Mammary epithelial cell (primary cell): ENCODE measurements at regions of chr9 and their contacts with region 1.

Region 1: GRCh38 chr9:119458068-119458467 is 88.8 kb upstream of the BRINP1 start:
- DNase-seq: no peak
- H3K4me3 ChIP-seq: no peak overlapping the region
- H3K27ac ChIP-seq: no peak overlapping the region
- H3K4me1 ChIP-seq: peaks cover 18% of the 10 kb centered on the region
- H3K27me3 ChIP-seq: no peaks in the 10 kb centered on the region
- CTCF ChIP-seq: peak in 1 of 2 donors; percentile 43

Region 2: GRCh38 chr9:119375892-119376291 is 82.2 kb before region 1 on chr9:
- CTCF ChIA-PET with region 1: no interaction called
- dilution Hi-C with region 1: no loop called
- in situ Hi-C with region 1: no loop called
- intact Hi-C with region 1: loop called (anchors 1 kb)
- DNase-seq: peak; percentile 33
- H3K4me3 ChIP-seq: no peak overlapping the region
- H3K27ac ChIP-seq: no peak overlapping the region
- H3K4me1 ChIP-seq: no peaks in the 10 kb centered on the region
- H3K27me3 ChIP-seq: peaks cover 2% of the 10 kb centered on the region
- CTCF ChIP-seq: peak; percentile 59 to 71

Region 3: GRCh38 chr9:119418721-119419120 is 39.3 kb before region 1 on chr9:
- CTCF ChIA-PET with region 1: no interaction called
- dilution Hi-C with region 1: no loop called
- in situ Hi-C with region 1: no loop called
- intact Hi-C with region 1: no loop called
- DNase-seq: peak; percentile 14
- H3K4me3 ChIP-seq: no peak overlapping the region
- H3K27ac ChIP-seq: no peak overlapping the region
- H3K4me1 ChIP-seq: no peaks in the 10 kb centered on the region
- H3K27me3 ChIP-seq: no peaks in the 10 kb centered on the region
- CTCF ChIP-seq: no peak